OCI-LY7 (cell line): ENCODE measurements at regions of chr1 and their contacts with region 1.

Region 1: DNA sequence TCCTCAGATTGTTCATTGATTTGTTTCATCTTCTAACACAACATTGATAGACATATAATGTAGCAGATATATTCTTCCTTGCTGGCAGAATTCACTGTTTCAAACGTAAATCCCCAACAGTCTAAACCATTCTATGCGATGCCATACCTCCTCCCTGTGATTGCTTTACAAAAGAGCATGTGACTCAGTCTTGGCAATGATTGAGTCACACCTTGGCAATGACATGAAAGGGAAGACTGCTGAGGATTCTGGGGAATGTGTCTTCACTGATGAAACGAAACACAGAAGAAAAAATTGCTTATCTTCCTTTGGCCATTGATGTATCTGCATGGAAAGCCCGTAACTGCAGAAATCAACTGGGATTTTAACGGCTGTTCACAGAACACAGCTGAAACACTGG is 409.6 kb upstream of the ZRANB2 start:
- DNase-seq: no peak
- H3K4me3 ChIP-seq: no peak overlapping the region
- H3K27ac ChIP-seq: no peak overlapping the region
- H3K4me1 ChIP-seq: no peaks in the 10 kb centered on the region
- CTCF ChIP-seq: no peak

Region 2: GRCh38 chr1:71509051-71509595 is 18.7 kb after region 1 on chr1:
- CTCF ChIA-PET with region 1: no interaction called
- POLR2A ChIA-PET with region 1: no interaction called
- intact Hi-C with region 1: loop called (anchors 2 kb)
- DNase-seq: no peak
- H3K4me3 ChIP-seq: no peak overlapping the region
- H3K27ac ChIP-seq: no peak overlapping the region
- H3K4me1 ChIP-seq: no peaks in the 10 kb centered on the region
- CTCF ChIP-seq: no peak

Region 3: DNA sequence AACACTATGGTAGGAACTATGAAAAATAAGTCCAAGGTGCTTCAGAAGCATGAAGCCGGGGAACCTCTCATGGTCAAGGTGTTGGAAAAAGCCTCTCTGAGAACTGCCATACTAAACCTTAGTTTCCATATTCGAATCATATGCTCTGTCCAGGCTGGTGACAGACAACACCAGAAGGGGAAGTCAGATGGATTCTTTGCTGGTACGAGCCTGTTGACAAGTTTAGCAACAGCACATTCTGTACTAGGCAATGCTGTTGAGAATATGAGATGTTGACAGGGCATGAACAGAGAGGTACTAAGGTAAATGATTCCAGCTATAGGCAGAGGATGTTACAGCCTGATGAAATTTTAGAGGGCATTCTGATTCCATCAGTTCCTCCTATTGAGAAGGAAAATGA is 51.7 kb after region 1 on chr1:
- CTCF ChIA-PET with region 1: no interaction called
- POLR2A ChIA-PET with region 1: no interaction called
- intact Hi-C with region 1: no loop called
- DNase-seq: no peak
- H3K4me3 ChIP-seq: no peak overlapping the region
- H3K27ac ChIP-seq: no peak overlapping the region
- H3K4me1 ChIP-seq: no peaks in the 10 kb centered on the region
- CTCF ChIP-seq: no peak